Left cardiac atrium (tissue), 4 donors: ENCODE measurements at regions of chr19 and their contacts with region 1.

Region 1: GRCh38 chr19:2663920-2664571 is 38.4 kb downstream of the GNG7 start:
- DNase-seq: peak; percentile 79
- ATAC-seq: peak; percentile 92 to 95

Region 2: DNA sequence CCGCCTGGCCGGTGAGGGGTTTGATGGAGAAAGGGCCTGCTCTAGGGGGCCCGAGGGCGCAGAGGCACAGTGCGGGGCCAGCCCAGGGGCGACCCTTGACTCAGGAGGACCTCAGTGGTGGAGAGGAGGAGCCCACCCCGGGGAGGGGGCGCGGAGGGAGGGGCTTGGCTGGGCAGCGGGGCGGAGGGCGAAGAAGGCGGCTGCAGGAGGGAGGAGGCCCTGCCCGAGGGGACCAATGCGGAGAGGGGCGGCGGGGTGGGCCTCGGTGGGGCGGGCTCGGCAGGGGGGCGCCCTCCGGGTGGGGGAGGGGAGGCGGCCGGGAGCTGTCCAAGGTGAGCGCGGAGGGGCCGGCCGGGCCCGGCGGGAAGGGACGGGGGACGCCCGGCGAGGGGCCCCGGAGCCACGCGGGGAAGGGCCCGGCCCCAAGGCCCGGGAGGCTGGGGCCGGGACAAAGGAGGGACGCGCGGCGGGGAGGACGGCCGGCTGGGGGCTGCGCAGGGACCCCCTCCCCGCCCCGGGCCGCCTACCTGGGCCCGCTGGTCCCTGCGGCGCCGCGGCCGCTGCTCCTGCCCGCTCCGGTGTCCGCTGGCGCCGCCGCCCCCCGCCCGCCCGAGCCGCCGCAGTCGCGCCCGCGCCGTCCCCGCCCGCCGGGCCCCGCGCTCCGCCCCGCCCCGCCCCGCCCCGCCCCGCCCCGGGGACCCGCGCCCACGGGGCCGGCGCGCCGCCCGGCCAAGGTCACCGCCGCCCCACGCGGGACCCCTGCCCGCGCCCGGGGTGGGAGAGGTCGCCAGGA is 56.9 kb after region 1 on chr19 and contains the start of gene DIRAS1:
- intact Hi-C with region 1: loop called in 1 of 2 experiments (anchors 1 kb)
- DNase-seq: no peak
- ATAC-seq: peak in 1 of 2 donors; percentile 12
- total RNA-seq, gene DIRAS1: 108 to 211 TPM